Heart left ventricle (tissue), 16 donors: ENCODE measurements at regions of chr22 and their contacts with region 1.

Region 1: GRCh38 chr22:22884010-22884887 is 3.4 kb upstream of the IGLL5 start:
- DNase-seq: peak in 4 of 5 donors; percentile 34 to 58 (median 54)
- ATAC-seq: peak; percentile 55 to 77 (median 69)
- H3K4me3 ChIP-seq: no peak overlapping the region
- H3K27ac ChIP-seq: no peak overlapping the region
- H3K4me1 ChIP-seq: no peaks in the 10 kb centered on the region
- H3K27me3 ChIP-seq: peaks cover 0 to 16% (median 0%) of the 10 kb centered on the region in 9 donors
- CTCF ChIP-seq: peak; percentile 33 to 79 (median 61)
- POLR2A ChIP-seq: no peak

Region 2: GRCh38 chr22:22210375-22210774 is 673.9 kb before region 1 on chr22:
- intact Hi-C with region 1: loop called in 1 of 10 experiments (anchors 10 kb)
- DNase-seq: no peak
- ATAC-seq: no peak
- H3K4me3 ChIP-seq: no peak overlapping the region
- H3K27ac ChIP-seq: no peak overlapping the region
- H3K4me1 ChIP-seq: no peaks in the 10 kb centered on the region
- H3K27me3 ChIP-seq: peaks cover 0 to 61% (median 9%) of the 10 kb centered on the region in 9 donors
- CTCF ChIP-seq: no peak
- POLR2A ChIP-seq: no peak

Region 3: GRCh38 chr22:22753526-22754267 is 130.6 kb before region 1 on chr22:
- intact Hi-C with region 1: loop called in 1 of 10 experiments (anchors 10 kb)
- DNase-seq: peak in 2 of 5 donors; percentile 33 to 39
- ATAC-seq: peak in 2 of 4 donors; percentile 49 to 56
- H3K4me3 ChIP-seq: no peak overlapping the region
- H3K27ac ChIP-seq: peak overlapping the region in 1 of 12 donors; percentile 70
- H3K4me1 ChIP-seq: peaks cover 0 to 21% (median 0%) of the 10 kb centered on the region in 12 donors
- H3K27me3 ChIP-seq: peaks cover 0 to 28% (median 0%) of the 10 kb centered on the region in 9 donors
- CTCF ChIP-seq: peak; percentile 22 to 60 (median 48)
- POLR2A ChIP-seq: no peak

Region 4: DNA sequence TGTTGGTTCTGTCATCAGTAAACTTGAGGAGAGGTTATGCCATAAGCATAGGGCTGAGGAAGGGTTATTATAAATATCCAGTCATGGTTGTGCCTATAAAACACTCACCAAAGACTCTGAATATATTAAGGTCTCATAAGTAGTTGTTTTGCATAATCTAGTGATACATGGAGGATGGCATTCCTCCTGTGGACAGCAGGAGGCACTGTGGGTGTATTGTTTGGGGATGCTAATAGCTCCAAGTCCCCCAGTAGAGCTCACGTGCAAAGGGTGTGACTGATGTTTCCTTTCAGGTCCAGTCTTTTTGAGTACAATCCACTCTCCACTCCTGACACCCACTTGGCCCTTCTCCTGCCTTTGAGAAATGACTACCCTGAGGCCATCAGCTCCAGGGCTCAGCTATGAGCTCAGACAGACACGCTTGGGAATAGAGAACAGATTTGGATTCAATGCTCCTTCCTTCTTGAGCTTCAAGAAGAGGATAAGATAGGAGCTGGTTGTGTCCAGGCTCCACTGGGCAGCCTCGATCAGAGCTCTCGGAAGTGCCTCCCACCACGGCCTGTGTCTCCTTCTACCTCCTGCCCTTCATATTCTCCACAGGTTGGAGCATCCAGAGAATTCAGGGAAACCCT is 81.8 kb before region 1 on chr22:
- intact Hi-C with region 1: loop called in 1 of 10 experiments (anchors 10 kb)
- DNase-seq: no peak
- ATAC-seq: no peak
- H3K4me3 ChIP-seq: no peak overlapping the region
- H3K27ac ChIP-seq: no peak overlapping the region
- H3K4me1 ChIP-seq: no peaks in the 10 kb centered on the region
- H3K27me3 ChIP-seq: peaks cover 0 to 32% (median 3%) of the 10 kb centered on the region in 9 donors
- CTCF ChIP-seq: peak in 8 of 12 donors; percentile 8 to 44 (median 20)
- POLR2A ChIP-seq: no peak

Region 5: DNA sequence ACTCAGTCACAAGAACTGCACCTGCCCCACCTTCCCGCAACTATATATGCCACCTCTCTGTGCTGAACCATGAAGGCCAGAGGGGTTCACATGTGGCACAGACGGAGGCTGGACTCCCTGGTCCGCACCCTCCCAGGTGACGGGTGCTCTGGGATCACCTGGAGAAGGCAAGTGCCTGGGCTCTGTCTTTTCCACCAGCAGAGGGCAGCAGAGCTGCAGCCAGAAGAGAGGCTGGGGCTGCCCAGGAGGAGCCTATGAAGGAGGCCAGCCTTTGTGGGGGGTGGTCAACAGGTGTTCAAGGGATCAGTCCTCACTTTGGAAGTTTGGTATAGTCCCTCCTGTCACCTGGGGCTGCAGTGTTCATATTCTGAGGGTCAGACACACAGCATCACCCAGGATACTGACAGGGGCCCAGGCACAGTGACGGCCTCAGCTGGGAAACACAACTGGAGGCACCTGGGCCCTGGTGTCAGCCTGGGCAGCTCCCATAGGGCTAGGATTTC is 35.8 kb before region 1 on chr22:
- intact Hi-C with region 1: loop called in 2 of 10 experiments (anchors 5 kb)
- DNase-seq: peak; percentile 43 to 75 (median 53)
- ATAC-seq: peak in 3 of 4 donors; percentile 47 to 81 (median 72)
- H3K4me3 ChIP-seq: no peak overlapping the region
- H3K27ac ChIP-seq: no peak overlapping the region
- H3K4me1 ChIP-seq: peaks cover 0 to 7% (median 0%) of the 10 kb centered on the region in 12 donors
- H3K27me3 ChIP-seq: peaks cover 0 to 35% (median 0%) of the 10 kb centered on the region in 9 donors
- CTCF ChIP-seq: peak; percentile 69 to 95 (median 86)
- POLR2A ChIP-seq: peak in 1 of 2 donors; percentile 26

Region 6: GRCh38 chr22:23014250-23014649 is 130.0 kb after region 1 on chr22:
- intact Hi-C with region 1: no loop called
- DNase-seq: no peak
- ATAC-seq: no peak
- H3K4me3 ChIP-seq: no peak overlapping the region
- H3K27ac ChIP-seq: no peak overlapping the region
- H3K4me1 ChIP-seq: no peaks in the 10 kb centered on the region
- H3K27me3 ChIP-seq: peaks cover 0 to 4% (median 0%) of the 10 kb centered on the region in 9 donors
- CTCF ChIP-seq: no peak
- POLR2A ChIP-seq: no peak